ENCODE measurements at regions of chr2 and their contacts with region 1.

Region 1: DNA sequence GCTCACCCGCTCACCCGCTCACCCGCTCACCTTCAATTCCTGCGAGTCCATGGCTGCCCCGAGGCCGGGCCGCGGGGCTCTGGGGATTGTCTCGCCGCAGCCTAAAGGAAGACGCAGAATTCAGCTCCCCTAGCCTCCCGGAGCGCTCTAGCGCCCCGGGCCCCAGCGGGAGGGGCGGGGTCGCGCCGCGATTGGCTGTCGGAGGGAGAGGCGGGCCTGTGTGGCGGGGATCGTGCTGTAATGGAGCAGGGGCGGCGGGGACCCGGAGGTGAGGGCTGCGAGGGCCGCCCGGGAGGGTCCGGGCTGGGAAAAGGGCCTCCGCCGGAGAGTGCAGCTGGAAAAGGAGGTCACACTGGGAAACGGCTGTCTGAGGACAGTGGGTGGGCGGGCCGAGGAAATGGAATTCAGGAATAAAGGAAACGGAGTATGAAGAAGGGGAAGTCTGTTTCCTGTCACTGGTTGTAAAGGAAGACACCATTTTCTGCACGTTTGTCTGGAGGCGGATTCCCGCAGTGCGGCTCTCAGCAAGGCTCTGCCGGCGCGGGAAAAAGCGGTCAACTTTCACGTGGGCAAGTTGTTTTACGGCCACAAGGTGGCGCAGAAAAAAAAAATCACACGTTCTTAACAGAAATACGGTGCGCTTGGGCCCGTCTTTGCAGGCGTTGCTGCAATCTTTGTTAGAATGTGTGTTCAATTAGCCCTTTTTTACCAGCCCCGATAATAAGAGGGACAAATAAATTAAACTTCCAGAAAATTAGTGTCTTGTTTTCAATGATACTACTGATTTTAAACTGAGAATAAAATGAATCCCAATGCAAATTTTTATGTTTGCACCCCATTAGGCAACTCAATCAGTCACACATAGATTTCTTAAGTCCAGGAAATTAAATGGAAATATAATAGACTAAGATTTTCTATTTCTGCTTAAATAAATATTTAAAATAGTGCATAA is at the start of gene TTC21B:
- DNase-seq: peak; percentile 97
- total RNA-seq, gene TTC21B: 14.6 TPM

Region 2: GRCh38 chr2:165927353-165927752 is 26.6 kb before region 1 on chr2:
- intact Hi-C with region 1: no loop called
- DNase-seq: no peak

Region 3: GRCh38 chr2:166127217-166128155 is 173.6 kb after region 1 on chr2 and contains the start of gene SCN1A:
- intact Hi-C with region 1: loop called (anchors 10 kb)
- DNase-seq: no peak
- total RNA-seq, gene SCN1A: not detected

Region 4: DNA sequence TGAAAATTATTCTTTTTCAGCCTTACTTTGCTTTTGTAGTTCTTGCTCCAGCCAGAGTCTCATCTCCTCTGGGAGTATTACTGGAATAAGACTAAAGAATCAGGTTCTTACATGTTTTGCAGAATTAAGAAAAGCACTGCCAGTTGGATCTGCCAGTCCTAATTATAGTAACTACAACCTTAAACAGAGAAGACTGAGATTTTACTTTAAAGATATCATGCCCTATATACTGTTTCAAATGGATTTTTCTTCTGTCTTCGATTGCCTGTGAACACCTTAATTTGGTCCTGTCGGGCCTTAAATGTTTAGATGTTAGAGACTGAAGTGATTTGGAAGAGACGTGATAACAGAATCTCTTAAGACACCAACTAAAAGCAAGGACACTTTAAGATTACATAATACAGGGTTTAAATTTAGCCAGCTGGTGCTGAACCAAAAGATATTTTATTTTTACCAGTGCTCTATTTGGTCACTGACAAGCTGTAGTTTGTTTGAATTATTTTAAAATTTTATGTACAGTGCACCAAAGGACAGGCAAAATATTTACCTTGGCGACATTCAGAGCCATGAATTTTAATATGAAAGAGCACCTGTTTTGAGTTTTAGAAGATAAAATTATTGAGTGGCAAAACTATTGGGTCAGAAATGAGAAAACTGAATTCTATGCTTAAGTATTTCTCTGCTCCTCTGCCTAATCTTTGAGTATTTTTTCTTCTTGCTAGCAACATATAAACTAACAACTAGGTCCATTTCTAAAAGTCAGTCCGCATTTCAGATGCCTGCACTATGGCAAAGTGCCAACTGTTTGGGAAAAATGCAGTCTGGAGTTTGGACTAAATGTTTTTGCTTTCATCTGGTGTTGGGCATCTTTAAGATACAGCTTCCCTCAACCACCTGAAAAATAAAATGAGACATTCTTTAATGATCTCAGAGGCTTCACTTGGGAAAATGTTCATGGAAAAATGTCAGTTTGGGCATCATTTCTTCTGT is 1234.3 kb after region 1 on chr2:
- intact Hi-C with region 1: loop called in 1 of 2 experiments (anchors 5 kb)
- DNase-seq: no peak